Activated naive CD4-positive, alpha-beta T cell treated with anti-CD3 and anti-CD28 coated beads for 36 hours (primary cell): ENCODE measurements at regions of chr16 and their contacts with region 1.

Region 1: DNA sequence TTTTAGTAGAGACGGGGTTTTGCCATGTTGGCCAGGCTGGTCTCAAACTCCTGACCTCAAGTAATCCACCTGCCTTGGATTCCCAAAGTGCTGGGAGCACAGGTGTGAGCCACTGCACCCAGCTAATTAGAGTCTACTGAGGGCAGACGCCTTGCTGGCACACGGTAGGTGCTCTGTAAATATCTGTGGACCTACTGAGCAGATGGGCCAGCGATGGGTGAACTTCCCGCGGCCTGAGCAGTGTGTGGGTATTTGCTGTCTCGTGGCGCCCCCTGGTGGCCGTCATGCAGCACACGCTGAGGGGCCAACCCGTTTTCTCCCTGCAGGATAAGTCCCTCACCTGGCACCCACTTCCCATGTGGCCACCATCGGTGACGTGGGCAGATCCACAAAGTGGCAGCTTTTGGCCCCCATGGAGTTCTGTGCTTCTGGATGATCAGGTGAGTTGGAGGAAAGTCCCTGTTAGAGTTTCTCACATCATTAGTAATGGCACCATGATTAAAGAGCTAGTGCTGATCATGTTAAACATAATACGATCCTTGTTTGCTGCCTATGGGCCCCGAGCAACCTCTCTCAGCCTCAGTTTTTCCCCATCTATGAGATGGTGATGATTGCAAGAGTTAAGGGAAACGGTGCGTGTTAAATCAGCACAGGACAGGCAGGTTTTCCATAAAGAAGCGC is 40.7 kb downstream of the ZDHHC7 start:
- DNase-seq: peak; percentile 86
- H3K4me3 Mint-ChIP-seq: no peak overlapping the region
- H3K27ac Mint-ChIP-seq: no peak overlapping the region
- H3K4me1 Mint-ChIP-seq: peaks cover 5% of the 10 kb centered on the region
- H3K27me3 Mint-ChIP-seq: no peaks in the 10 kb centered on the region

Region 2: DNA sequence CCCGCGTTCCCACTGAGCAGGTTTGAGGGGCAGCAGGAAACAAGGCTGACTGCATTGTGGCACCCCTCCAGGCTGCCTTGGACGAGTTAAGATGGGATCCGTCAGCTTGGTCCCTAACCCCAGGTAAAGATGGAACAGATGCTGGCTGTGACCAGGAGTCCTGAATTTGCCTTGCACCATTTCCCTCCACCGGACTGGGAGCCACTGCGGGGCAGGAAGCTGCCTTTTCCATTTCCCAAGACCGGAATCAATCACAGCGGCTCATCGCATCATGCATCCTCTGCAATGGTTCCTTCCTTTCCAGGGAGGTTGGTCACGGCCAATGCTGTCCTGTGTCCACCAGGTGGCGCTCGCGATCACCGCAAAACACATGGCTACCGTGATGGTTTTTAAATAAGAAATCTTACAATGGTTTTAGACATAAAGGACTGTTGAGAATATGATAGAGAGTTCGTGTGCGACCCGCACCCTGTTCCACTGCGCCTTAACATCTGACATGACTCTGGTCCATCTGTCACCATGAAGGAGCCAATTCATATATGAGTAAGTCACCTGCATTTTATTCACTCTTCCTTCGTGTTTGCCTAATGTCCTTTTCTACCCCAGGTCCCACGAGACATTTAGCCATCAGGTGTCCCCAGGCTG is 459.3 kb before region 1 on chr16:
- CTCF ChIA-PET with region 1: no interaction called
- intact Hi-C with region 1: loop called (anchors 1 kb)
- DNase-seq: peak; percentile 86
- H3K4me3 Mint-ChIP-seq: no peak overlapping the region
- H3K27ac Mint-ChIP-seq: no peak overlapping the region
- H3K4me1 Mint-ChIP-seq: peaks cover 64% of the 10 kb centered on the region
- H3K27me3 Mint-ChIP-seq: no peaks in the 10 kb centered on the region

Region 3: DNA sequence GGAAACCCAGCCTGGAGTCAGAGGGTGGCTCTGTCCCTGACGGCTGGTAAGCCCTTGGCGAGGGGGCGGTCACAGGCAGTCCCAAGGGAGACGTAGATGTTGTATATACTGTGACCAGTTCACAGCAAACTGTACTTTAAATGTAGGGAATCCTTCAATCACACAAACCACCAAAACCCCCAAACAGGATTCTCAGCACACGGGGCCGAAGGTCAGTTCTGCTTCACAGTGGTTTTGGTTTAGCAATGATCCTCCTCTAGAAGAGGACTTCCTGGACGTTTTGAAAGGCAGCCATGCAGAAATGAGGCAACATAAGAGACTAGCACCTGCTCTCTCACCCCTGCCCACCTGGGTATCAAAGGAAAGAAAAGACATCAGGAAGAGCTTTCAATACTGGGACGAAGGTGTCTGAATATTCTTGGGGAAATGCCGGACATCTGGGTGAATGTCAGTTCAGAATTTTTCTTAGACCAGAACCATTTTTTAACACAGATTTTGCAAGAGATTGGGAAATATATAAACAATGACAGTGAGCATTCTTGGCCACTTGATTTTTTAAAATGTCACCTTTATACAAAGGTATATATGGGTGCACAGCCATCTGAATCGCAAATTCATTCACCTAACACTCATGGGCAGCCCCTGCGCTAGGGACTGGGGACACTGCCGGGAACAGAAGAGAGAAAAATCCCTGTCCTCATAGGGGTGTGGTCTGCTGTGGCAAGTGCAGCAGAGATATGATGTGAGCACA is 76.6 kb before region 1 on chr16:
- CTCF ChIA-PET with region 1: no interaction called
- intact Hi-C with region 1: no loop called
- DNase-seq: no peak
- H3K4me3 Mint-ChIP-seq: no peak overlapping the region
- H3K27ac Mint-ChIP-seq: no peak overlapping the region
- H3K4me1 Mint-ChIP-seq: peaks cover 6% of the 10 kb centered on the region
- H3K27me3 Mint-ChIP-seq: no peaks in the 10 kb centered on the region

Region 4: DNA sequence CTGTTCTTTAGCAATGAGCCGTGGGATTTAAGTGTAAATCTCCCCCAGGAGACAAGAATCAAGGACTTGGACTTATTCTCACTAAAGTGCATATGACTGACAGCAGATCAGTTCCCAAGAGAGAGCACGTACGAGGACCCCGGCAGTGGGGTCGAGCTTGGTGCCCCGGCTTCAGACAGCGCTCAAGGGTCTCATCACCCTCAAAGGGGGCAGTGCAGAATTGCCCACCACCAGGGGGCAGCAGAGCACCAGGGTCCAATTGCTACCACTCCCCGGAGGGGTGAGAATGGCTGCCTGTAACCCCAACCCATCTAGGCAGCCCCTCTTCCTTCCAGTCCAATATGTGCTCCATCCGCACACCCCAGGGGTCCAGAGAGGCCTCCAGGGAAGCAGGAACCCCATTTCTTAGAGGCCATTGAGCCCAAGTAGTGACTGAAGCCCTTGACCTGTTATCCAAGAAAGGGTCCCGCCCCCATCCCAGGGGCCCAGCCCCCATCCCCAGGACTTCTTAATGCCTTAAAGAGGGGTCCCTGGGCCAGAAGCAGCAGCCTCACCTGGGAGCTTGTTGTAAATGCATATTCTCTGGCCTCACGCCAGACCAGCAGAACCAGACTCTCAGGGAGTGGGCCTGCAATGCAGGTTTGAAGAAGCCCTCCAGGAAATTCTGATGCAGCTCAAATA is 45.4 kb before region 1 on chr16:
- CTCF ChIA-PET with region 1: interaction called, 31 read pairs
- intact Hi-C with region 1: loop called (anchors 1 kb)
- DNase-seq: peak; percentile 77
- H3K4me3 Mint-ChIP-seq: no peak overlapping the region
- H3K27ac Mint-ChIP-seq: no peak overlapping the region
- H3K4me1 Mint-ChIP-seq: no peaks in the 10 kb centered on the region
- H3K27me3 Mint-ChIP-seq: no peaks in the 10 kb centered on the region

Region 5: DNA sequence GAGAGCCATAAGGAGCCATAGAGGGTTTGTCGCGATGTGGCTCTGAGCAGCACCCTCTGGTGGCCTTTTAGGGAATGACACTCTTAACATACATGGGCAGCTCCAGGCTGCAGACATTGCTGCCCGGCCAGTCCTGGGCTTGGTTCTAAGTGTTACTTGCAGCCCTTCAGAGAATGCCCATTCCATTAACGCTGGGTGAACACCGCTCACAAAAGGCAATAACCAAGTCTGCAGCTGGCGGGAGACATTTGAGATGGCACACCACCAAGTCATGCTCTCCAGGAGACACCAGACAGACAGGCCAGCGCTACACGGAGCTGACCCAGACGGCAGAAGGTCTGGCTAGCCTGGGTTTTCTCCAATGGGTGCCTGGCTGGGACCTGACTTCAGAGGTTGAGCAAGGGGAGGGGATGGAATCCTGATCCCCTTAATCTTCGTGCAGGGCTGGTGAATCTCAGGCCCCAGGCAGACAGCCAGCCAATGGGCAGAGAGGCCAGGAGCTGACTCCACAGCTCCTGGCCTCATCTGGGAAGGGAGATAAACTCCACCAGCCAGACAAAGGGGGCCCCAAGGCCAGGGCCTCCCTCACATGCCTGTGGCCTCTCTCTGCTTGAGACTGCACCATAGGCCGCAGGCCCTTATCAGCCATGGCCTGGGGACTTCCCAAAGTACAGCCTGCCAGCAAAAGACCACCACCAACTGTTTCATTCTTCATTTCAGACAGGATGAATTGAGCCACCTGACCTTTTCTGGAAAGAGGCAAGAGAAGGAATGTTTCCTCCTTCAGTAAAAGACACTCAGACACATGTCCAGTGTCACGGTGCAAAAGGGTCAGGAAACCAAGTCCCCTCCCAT is 18.0 kb before region 1 on chr16:
- CTCF ChIA-PET with region 1: interaction called, 82 read pairs
- intact Hi-C with region 1: no loop called
- DNase-seq: peak; percentile 83
- H3K4me3 Mint-ChIP-seq: no peak overlapping the region
- H3K27ac Mint-ChIP-seq: no peak overlapping the region
- H3K4me1 Mint-ChIP-seq: no peaks in the 10 kb centered on the region
- H3K27me3 Mint-ChIP-seq: no peaks in the 10 kb centered on the region

Region 6: DNA sequence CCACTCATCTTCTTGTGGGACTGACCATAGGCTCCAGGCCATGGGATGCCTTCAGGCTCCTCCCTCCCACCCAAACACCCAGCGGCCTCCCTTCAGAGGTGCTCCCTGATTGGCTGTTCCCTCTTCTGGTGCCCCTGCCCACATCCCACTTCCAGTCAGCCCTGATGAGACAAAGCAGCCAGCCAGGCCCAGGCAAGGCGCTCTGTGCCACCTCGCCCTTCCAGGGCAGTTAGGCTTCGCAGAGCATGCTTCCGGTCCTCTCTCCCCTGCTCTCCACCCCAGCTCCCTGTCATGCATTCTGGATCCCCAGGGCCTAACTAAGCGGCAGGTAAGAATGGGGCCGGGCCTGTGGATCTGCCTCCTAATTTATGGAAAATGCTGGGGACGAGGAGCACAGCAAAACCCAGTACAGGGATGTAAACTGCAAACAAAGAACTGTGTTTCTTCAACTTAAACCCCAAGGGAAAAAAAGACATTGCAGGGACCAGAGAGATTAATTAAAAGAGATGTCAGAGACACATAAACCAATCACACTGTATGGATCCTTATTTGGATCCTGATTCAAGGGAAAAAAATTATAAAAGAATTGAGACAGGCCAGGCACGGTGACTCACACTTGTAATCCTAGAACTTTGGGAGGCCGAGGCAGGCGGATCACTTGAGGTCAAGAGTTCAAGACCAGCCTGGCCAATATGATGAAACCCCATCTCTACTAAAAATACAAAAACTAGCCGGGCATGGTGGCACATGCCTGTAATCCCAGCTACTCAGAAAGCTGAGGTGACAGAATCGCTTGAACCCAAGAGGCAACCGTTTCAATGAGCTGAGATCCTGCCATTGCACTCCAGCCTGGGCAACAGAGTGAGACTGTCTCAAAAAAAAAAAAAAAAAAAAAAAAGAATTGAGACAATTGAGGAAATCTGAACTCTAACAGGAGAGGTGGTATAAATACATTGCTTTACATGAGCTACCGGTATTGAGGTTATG is 14.8 kb after region 1 on chr16:
- CTCF ChIA-PET with region 1: interaction called, 10 read pairs
- intact Hi-C with region 1: no loop called
- DNase-seq: no peak
- H3K4me3 Mint-ChIP-seq: no peak overlapping the region
- H3K27ac Mint-ChIP-seq: peak overlapping the region; percentile 56
- H3K4me1 Mint-ChIP-seq: peaks cover 12% of the 10 kb centered on the region
- H3K27me3 Mint-ChIP-seq: no peaks in the 10 kb centered on the region

Region 7: GRCh38 chr16:84995663-84996062 is 25.1 kb after region 1 on chr16:
- CTCF ChIA-PET with region 1: no interaction called
- intact Hi-C with region 1: no loop called
- DNase-seq: peak; percentile 16
- H3K4me3 Mint-ChIP-seq: no peak overlapping the region
- H3K27ac Mint-ChIP-seq: no peak overlapping the region
- H3K4me1 Mint-ChIP-seq: peaks cover 19% of the 10 kb centered on the region
- H3K27me3 Mint-ChIP-seq: no peaks in the 10 kb centered on the region

Region 8: GRCh38 chr16:85077039-85077438 is 106.5 kb after region 1 on chr16:
- CTCF ChIA-PET with region 1: no interaction called
- intact Hi-C with region 1: no loop called
- DNase-seq: no peak
- H3K4me3 Mint-ChIP-seq: no peak overlapping the region
- H3K27ac Mint-ChIP-seq: no peak overlapping the region
- H3K4me1 Mint-ChIP-seq: no peaks in the 10 kb centered on the region
- H3K27me3 Mint-ChIP-seq: no peaks in the 10 kb centered on the region